ENCODE measurements at regions of chr9 and their contacts with region 1.

Region 1: GRCh38 chr9:137277329-137278041 is at the start of gene TOR4A:
- DNase-seq: peak in 2 of 3 donors; percentile 56 to 74
- H3K4me3 ChIP-seq: peak within 1 kb of the TSS; percentile 42 to 86 (median 72)
- H3K27ac ChIP-seq: peak within 1 kb of the TSS; percentile 25 to 83
- H3K4me1 ChIP-seq: peaks cover 0 to 78% (median 66%) of the 10 kb centered on the region in 4 experiments
- H3K27me3 ChIP-seq: no peaks in the 10 kb centered on the region

Region 2: DNA sequence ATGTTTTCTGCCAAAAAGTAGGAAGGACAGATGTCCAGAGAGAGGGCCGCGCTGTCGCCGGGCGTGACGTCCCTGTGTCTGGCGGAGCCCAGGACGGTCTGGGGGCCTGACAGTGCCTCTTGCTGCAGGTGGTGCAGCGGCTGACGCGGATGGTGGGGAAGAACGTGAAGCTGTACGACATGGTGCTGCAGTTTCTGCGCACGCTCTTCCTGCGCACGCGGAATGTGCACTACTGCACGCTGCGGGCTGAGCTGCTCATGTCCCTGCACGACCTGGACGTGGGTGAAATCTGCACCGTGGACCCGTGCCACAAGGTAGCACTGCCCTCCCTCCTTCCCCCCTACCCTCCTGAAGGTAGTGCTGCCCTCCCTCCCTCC is 14.6 kb before region 1 on chr9:
- CTCF ChIA-PET with region 1: interaction called, 10 read pairs
- POLR2A ChIA-PET with region 1: no interaction called
- DNase-seq: no peak
- H3K4me3 ChIP-seq: no peak overlapping the region
- H3K27ac ChIP-seq: no peak overlapping the region
- H3K4me1 ChIP-seq: peaks cover 0 to 8% (median 4%) of the 10 kb centered on the region in 4 experiments
- H3K27me3 ChIP-seq: no peaks in the 10 kb centered on the region